H1 (cell line): ENCODE measurements at regions of chr7 and their contacts with region 1.

Region 1: DNA sequence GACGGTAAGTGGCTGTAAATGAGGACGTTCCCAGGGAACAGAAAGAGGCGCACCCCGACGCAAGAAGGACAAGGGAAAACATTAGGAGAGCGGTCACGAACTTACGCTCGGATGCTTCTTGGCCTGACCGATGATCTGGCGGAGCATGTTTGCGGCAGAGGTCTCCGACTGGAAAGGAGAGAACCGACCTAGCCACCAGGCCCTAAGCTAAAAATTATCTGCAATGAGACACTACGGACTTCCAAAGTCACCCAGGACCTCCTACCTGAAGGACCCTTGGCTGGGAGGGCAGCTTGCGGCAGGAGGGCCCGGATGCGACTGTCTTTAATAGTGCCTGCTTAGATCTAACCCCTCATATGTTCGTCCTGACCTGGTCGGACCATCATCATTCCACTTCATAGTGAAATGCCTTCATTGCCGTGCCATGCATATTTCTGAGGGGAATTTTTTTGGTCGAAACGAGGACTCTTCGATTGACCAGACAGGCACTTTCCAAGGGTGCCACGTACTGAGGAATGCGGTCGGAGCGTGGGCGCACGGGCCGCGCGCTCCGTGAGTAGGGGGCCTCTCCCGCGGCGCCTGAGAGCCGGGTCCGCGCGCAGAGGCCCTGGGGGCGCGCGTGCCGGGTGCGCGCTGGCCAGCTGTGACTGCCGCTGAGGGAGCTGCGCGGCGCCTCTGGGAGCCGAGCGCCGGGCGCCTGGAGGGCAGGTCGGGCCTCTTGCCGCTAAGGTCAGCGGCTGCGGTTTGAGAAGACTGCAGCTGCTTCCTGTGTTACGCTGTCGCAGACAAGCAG is 33.6 kb upstream of the PHF14 start:
- DNase-seq: peak; percentile 73 to 85
- H3K4me3 ChIP-seq: peak overlapping the region; percentile 80 to 100 (median 96)
- H3K27ac ChIP-seq: peak overlapping the region; percentile 99
- H3K4me1 ChIP-seq: peaks cover 0 to 8% (median 4%) of the 10 kb centered on the region in 4 experiments; a peak in 2 of 7 replicates
- H3K27me3 ChIP-seq: no peaks in the 10 kb centered on the region
- CTCF ChIP-seq: no peak
- EP300 ChIP-seq: no peak
- POLR2A ChIP-seq: peak; percentile 95 to 97
- RAD21 ChIP-seq: 0 out of 4 replicates have a peak, but pooled peaks of 1 of the 2 experiments have one; percentile 18

Region 2: GRCh38 chr7:10973061-10973944 is 33.2 kb after region 1 on chr7 and contains the start of gene PHF14:
- CTCF ChIA-PET with region 1: no interaction called
- POLR2A ChIA-PET with region 1: interaction called, 41 read pairs
- DNase-seq: peak; percentile 96
- H3K4me3 ChIP-seq: peak within 1 kb of the TSS; percentile 59 to 93 (median 90)
- H3K27ac ChIP-seq: peak within 1 kb of the TSS; percentile 89
- H3K4me1 ChIP-seq: no peaks in the 10 kb centered on the region; a peak in 2 of 7 replicates
- H3K27me3 ChIP-seq: no peaks in the 10 kb centered on the region
- CTCF ChIP-seq: no peak
- EP300 ChIP-seq: no peak
- POLR2A ChIP-seq: peak; percentile 83 to 93
- RAD21 ChIP-seq: no peak
- total RNA-seq, gene PHF14: 63.3 and 70.6 TPM in 2 replicates

Region 3: GRCh38 chr7:11039974-11040373 is 99.9 kb after region 1 on chr7:
- CTCF ChIA-PET with region 1: no interaction called
- POLR2A ChIA-PET with region 1: no interaction called
- DNase-seq: no peak
- H3K4me3 ChIP-seq: no peak overlapping the region
- H3K27ac ChIP-seq: no peak overlapping the region
- H3K4me1 ChIP-seq: no peaks in the 10 kb centered on the region
- H3K27me3 ChIP-seq: no peaks in the 10 kb centered on the region
- CTCF ChIP-seq: no peak
- EP300 ChIP-seq: no peak
- POLR2A ChIP-seq: no peak
- RAD21 ChIP-seq: no peak

Region 4: DNA sequence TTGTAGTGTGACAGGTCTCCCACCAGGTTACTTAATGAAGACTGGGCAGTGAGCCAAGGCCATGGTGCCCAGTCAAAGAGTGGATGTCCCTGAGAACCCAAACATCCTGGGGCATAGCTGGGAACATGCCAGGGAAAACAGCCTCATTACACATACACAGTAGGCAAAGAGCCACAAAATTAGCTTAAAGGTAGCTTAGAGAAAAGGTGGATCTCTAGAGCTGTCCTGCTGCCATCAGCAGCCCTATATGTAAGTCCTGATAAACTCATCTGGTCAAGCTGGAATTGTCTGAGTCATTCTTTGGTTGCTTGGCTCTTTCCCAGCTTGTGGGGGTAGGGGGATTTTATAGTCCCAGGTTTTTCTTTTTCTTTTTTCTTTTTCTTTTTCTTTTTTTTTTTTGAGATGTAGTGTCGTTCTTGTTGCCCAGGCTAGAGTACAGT is 321.4 kb after region 1 on chr7:
- CTCF ChIA-PET with region 1: no interaction called
- POLR2A ChIA-PET with region 1: no interaction called
- DNase-seq: no peak
- H3K4me3 ChIP-seq: no peak overlapping the region
- H3K27ac ChIP-seq: no peak overlapping the region
- H3K4me1 ChIP-seq: no peaks in the 10 kb centered on the region
- H3K27me3 ChIP-seq: no peaks in the 10 kb centered on the region
- CTCF ChIP-seq: no peak
- EP300 ChIP-seq: no peak
- POLR2A ChIP-seq: no peak
- RAD21 ChIP-seq: no peak